PC-3 (cell line): ENCODE measurements at regions of chr5 and their contacts with region 1.

Region 1: DNA sequence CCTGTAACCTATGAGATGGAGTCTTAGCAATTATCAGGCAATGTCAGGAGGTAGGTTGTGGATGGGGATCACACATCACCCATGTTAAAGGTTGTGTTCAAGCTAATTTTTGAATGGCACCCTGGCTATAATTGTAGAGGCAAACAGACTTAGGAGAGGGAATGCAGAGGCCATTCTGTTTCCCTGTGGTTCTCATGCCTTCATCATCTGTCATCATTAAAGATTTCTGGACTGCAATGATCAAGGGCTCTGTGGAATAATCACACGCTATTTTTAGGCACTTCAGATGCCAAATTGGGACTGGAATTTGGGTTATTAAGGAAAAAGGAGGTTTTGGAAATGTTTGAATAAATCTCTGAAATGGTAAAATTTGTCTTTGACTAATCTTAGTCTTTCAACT is 1065.4 kb downstream of the TAF11L14 start:
- DNase-seq: no peak
- ATAC-seq: no peak
- H3K4me3 ChIP-seq: no peak overlapping the region
- H3K27ac ChIP-seq: no peak overlapping the region
- H3K4me1 ChIP-seq: peaks cover 5% of the 10 kb centered on the region
- H3K27me3 ChIP-seq: no peaks in the 10 kb centered on the region
- CTCF ChIP-seq: no peak

Region 2: GRCh38 chr5:17634160-17634559 is 1065.5 kb before region 1 on chr5 and contains the start of gene TAF11L14:
- CTCF ChIA-PET with region 1: no interaction called
- POLR2A ChIA-PET with region 1: no interaction called
- intact Hi-C with region 1: no loop called
- DNase-seq: no peak
- ATAC-seq: no peak
- H3K4me3 ChIP-seq: no peak within 1 kb of the TSS
- H3K27ac ChIP-seq: no peak within 1 kb of the TSS
- H3K4me1 ChIP-seq: no peaks in the 10 kb centered on the region
- H3K27me3 ChIP-seq: no peaks in the 10 kb centered on the region
- CTCF ChIP-seq: no peak
- total RNA-seq, gene TAF11L14: not detected in 2 replicates

Region 3: GRCh38 chr5:18393589-18394442 is 305.9 kb before region 1 on chr5:
- CTCF ChIA-PET with region 1: interaction called, 5 read pairs
- POLR2A ChIA-PET with region 1: no interaction called
- intact Hi-C with region 1: loop called (anchors 1 kb)
- DNase-seq: peak; percentile 87
- ATAC-seq: peak; percentile 84
- H3K4me3 ChIP-seq: no peak overlapping the region; the same call in 1 of the 2 replicates
- H3K27ac ChIP-seq: no peak overlapping the region
- H3K4me1 ChIP-seq: 0 out of 2 replicates have a peak, but pooled peaks cover 3% of the 10 kb centered on the region
- H3K27me3 ChIP-seq: peaks cover 2% of the 10 kb centered on the region; the same call in 1 of the 2 replicates
- CTCF ChIP-seq: peak; percentile 97

Region 4: DNA sequence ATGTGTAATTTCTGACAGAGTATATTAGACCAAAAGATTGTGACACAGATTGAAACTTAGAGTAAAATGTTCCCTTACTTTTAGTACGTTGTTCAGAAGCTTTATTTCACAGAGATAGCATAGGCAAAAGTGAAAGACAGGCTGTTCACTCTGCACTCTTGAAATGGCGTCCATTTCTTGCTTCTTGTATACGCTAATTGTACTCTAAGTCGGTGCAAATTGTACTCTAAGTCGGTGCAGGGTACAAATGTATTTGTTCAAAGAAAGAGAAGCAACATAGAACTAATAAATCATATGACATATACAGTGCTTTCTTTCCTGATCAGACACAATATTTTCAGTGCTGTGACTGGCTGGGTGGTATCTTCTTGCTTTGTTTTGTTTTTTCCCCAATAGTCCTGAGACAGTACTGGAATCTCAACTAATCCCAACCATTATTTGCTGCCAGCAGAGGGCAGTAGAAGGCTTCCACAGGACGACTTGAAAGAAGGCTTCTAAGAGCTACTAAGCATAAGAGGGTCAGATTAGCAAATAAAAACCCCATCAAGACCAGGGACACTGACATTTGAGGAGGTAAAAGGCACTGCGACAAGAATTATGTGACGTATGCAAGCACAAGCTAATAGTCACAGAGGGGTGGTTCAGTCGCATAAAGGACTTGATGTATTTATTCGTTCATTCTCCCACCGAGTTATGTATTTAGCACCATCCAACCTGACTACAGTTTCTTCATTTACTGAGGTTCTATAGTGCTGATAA is 233.7 kb before region 1 on chr5:
- CTCF ChIA-PET with region 1: interaction called, 7 read pairs
- POLR2A ChIA-PET with region 1: no interaction called
- intact Hi-C with region 1: loop called (anchors 1 kb)
- DNase-seq: peak; percentile 82
- ATAC-seq: peak; percentile 87
- H3K4me3 ChIP-seq: peak overlapping the region; percentile 60
- H3K27ac ChIP-seq: no peak overlapping the region
- H3K4me1 ChIP-seq: 0 out of 2 replicates have a peak, but pooled peaks cover 6% of the 10 kb centered on the region
- H3K27me3 ChIP-seq: no peaks in the 10 kb centered on the region
- CTCF ChIP-seq: peak; percentile 84

Region 5: GRCh38 chr5:19806776-19807175 is 1107.1 kb after region 1 on chr5:
- CTCF ChIA-PET with region 1: no interaction called
- POLR2A ChIA-PET with region 1: no interaction called
- intact Hi-C with region 1: no loop called
- DNase-seq: peak; percentile 18
- ATAC-seq: no peak
- H3K4me3 ChIP-seq: no peak overlapping the region
- H3K27ac ChIP-seq: no peak overlapping the region
- H3K4me1 ChIP-seq: no peaks in the 10 kb centered on the region
- H3K27me3 ChIP-seq: no peaks in the 10 kb centered on the region
- CTCF ChIP-seq: no peak